PC-9 (cell line): ENCODE measurements at regions of chr10 and their contacts with region 1.

Region 1: GRCh38 chr10:31829776-31830175 is 98.9 kb downstream of the ARHGAP12 start:
- DNase-seq: no peak
- H3K4me3 ChIP-seq: no peak overlapping the region
- H3K27ac ChIP-seq: no peak overlapping the region
- H3K4me1 ChIP-seq: no peaks in the 10 kb centered on the region
- H3K27me3 ChIP-seq: no peaks in the 10 kb centered on the region
- CTCF ChIP-seq: no peak

Region 2: DNA sequence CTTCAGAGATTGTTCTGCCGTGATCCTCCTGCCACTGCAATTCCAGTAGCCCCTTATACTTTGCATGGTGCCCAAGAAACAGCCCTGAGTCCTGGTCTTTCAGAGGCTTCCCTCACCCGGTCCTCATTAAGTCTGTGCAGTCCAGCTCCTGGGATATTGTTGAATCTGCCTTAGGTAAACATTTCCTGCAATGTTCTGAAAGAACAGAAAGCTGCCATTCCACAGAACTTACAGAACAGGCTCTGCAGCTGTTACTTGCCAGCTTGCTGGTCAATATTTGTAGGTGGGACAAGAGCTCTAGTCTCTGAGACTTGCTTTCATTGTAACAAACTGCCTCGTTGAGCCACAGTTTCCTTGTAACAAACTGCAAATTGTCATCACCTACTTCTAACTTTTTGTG is 341.4 kb after region 1 on chr10:
- CTCF ChIA-PET with region 1: interaction called, 14 read pairs
- POLR2A ChIA-PET with region 1: no interaction called
- intact Hi-C with region 1: no loop called
- DNase-seq: peak; percentile 47 to 79
- H3K4me3 ChIP-seq: peak overlapping the region; percentile 7; the same call in 1 of the 2 replicates
- H3K27ac ChIP-seq: peak overlapping the region; percentile 47
- H3K4me1 ChIP-seq: peaks cover 19% of the 10 kb centered on the region
- H3K27me3 ChIP-seq: no peaks in the 10 kb centered on the region
- CTCF ChIP-seq: no peak